KBM-7 (cell line): ENCODE measurements at regions of chr4 and their contacts with region 1.

Region 1: DNA sequence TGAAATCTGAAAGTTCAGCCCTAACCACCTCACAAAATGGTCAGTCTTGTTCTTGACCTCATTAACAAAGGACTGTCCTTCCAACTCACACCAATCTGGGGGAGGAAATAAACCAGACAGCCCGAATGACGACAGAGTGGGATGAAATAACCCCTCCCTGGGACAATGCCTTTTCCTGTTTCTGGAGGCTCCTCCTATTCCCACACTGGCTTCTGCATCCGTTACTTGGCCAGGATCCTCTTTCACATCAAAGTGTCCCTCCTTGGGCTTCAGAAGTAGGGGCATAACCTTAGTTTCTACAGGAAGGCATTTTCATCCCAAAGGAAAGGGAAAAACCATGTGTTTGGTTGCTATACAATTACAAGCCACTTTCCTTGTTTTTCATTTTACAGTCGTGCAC is 59.8 kb upstream of the RPL34 start:
- DNase-seq: no peak

Region 2: DNA sequence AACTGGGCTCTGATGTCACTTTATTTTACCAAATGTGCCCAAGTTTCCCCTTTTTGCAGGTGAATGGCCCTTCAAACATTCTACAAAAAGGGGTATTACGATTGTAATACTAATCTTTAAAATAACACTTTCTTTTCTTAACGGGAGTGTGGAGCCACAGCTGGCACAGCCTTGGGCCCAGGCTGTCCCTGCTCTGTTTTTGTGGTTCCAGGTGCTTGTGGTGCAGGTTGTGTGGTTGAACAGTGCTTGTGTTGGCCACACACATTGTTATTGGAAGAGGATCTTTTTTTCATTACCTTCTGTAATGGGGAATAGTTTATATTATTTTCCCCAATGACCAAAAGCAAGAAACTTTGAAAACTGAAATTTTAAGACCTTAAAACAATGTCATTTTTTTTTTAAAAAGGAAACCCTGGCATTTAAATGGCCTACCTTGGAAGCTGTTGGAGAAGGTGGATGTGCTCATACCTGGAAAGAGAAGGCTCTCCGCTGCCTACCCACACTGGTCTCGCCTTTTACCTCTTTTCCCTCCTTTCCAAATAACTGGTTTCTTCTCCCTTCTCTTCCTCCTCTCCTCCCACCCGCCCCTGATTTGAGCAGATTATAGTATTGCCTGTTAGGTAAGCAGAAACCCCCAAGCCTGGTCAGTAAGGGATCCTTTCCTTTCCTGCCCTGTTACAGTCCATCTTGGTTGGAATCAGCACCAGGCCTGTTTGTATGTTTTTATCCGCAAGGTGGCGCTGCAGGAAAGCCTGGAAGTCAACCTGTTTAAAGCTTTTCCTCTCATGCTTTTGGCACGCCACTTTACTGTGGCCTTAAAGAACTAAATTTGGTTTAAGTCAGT is 542.4 kb before region 1 on chr4:
- in situ Hi-C with region 1: loop called (anchors 25 kb)
- DNase-seq: peak; percentile 72